Ascending aorta (tissue), 2 donors: ENCODE measurements at regions of chr14 and their contacts with region 1.

Region 1: DNA sequence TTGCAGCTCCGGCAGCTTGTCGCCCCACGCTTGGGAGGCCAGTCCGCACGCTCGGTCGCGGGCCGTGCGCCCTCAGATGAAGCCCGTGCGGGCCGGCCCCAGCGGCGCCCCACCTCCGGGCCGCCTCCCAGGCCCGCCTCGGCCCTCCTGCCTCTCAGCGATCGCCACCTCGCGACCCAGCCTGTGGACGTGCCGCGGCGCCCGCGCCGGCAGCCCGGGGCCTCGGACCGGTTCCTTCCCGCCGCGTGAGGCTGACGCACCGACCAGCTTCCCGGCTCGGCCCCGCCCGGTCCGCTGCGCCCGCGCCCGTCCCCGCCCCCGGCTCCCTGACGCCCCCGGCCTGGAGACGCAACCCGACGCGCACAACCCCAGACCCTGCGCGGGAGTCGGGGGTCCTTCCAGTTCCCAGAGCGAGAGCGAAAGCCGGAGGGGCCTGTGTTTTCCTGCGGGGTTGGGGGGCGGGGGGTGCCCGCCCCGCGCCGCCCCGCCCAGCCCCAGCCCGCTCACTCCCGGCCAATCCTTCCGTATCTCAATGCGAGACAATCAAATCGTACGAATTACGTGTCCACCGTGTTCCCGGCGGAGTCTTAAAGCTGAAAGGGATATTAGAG is at the start of gene ERO1A:
- DNase-seq: peak; percentile 44 to 91
- H3K4me3 ChIP-seq: peak within 1 kb of the TSS; percentile 96 to 98
- H3K27ac ChIP-seq: peak within 1 kb of the TSS; percentile 97 to 99
- H3K4me1 ChIP-seq: peaks cover 3 to 4% of the 10 kb centered on the region in 2 donors
- H3K27me3 ChIP-seq: no peaks in the 10 kb centered on the region
- CTCF ChIP-seq: no peak
- total RNA-seq, gene ERO1A: 25.9 TPM

Region 2: DNA sequence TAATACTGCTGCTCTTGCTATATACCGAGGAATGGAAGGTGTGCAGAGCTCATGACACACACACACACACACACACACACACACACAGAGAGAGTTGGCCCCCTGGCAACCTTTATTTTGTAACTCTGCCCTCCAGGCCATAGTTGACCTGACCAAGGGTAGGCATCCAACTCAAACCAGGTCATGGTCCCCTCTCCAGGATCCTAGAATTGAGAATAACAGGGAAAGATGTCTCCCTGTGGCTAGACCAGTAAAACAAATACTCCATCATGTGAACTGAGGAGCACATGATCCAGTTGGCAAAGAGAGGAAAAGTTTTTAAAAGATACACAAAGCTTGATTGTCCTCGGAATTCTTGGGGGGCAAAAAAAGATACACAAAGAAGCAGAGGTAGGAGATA is 11.5 kb before region 1 on chr14:
- intact Hi-C with region 1: no loop called
- DNase-seq: no peak
- H3K4me3 ChIP-seq: no peak overlapping the region
- H3K27ac ChIP-seq: no peak overlapping the region
- H3K4me1 ChIP-seq: no peaks in the 10 kb centered on the region
- H3K27me3 ChIP-seq: no peaks in the 10 kb centered on the region
- CTCF ChIP-seq: no peak

Region 3: GRCh38 chr14:52706724-52707706 is 11.4 kb after region 1 on chr14 and contains the start of gene PSMC6:
- intact Hi-C with region 1: loop called (anchors 1 kb)
- DNase-seq: peak; percentile 80 to 96
- H3K4me3 ChIP-seq: peak within 1 kb of the TSS; percentile 78 to 96
- H3K27ac ChIP-seq: peak within 1 kb of the TSS; percentile 89
- H3K4me1 ChIP-seq: peaks cover 7 to 15% of the 10 kb centered on the region in 2 donors
- H3K27me3 ChIP-seq: no peaks in the 10 kb centered on the region
- CTCF ChIP-seq: no peak
- total RNA-seq, gene PSMC6: 19.3 TPM

Region 4: GRCh38 chr14:52791203-52792096 is 95.9 kb after region 1 on chr14 and contains the start of gene GNPNAT1:
- intact Hi-C with region 1: loop called (anchors 5 kb)
- DNase-seq: peak; percentile 42 to 92
- H3K4me3 ChIP-seq: peak within 1 kb of the TSS; percentile 83 to 91
- H3K27ac ChIP-seq: peak within 1 kb of the TSS; percentile 94 to 95
- H3K4me1 ChIP-seq: peaks cover 6 to 21% of the 10 kb centered on the region in 2 donors
- H3K27me3 ChIP-seq: no peaks in the 10 kb centered on the region
- CTCF ChIP-seq: no peak
- total RNA-seq, gene GNPNAT1: 39.9 TPM